GM12878 (cell line): ENCODE measurements at regions of chr10 and their contacts with region 1.

Region 1: GRCh38 chr10:5710859-5711258 is 26.2 kb downstream of the TASOR2 start:
- DNase-seq: no peak
- ATAC-seq: peak; percentile 63
- H3K4me3 ChIP-seq: peak overlapping the region; percentile 31; the same call in 1 of the 2 replicates
- H3K27ac ChIP-seq: peak overlapping the region; percentile 51; the same call in 1 of the 2 replicates
- H3K4me1 ChIP-seq: peaks cover 4% of the 10 kb centered on the region; the same call in 1 of the 2 replicates
- H3K27me3 ChIP-seq: no peaks in the 10 kb centered on the region
- CTCF ChIP-seq: no peak
- EP300 ChIP-seq: no peak
- POLR2A ChIP-seq: no peak
- RAD21 ChIP-seq: no peak

Region 2: GRCh38 chr10:5648584-5649457 is 62.0 kb before region 1 on chr10:
- CTCF ChIA-PET with region 1: no interaction called
- POLR2A ChIA-PET with region 1: no interaction called
- RAD21 ChIA-PET with region 1: no interaction called
- SMC1A ChIA-PET with region 1: no interaction called
- in situ Hi-C with region 1: no loop called
- intact Hi-C with region 1: no loop called
- DNase-seq: no peak
- ATAC-seq: peak; percentile 23; the same call in 2 of the 3 replicates
- H3K4me3 ChIP-seq: no peak overlapping the region
- H3K27ac ChIP-seq: no peak overlapping the region
- H3K4me1 ChIP-seq: peaks cover 10% of the 10 kb centered on the region
- H3K27me3 ChIP-seq: no peaks in the 10 kb centered on the region
- CTCF ChIP-seq: no peak
- EP300 ChIP-seq: no peak
- POLR2A ChIP-seq: no peak
- RAD21 ChIP-seq: no peak

Region 3: GRCh38 chr10:5692461-5693358 is 18.1 kb before region 1 on chr10:
- CTCF ChIA-PET with region 1: interaction called, 21 read pairs
- POLR2A ChIA-PET with region 1: interaction called, 9 read pairs
- RAD21 ChIA-PET with region 1: interaction called, 22 read pairs
- SMC1A ChIA-PET with region 1: interaction called, 191 read pairs
- in situ Hi-C with region 1: no loop called
- intact Hi-C with region 1: loop called (anchors 2 kb)
- DNase-seq: peak; percentile 32
- ATAC-seq: peak; percentile 90
- H3K4me3 ChIP-seq: peak overlapping the region; percentile 83
- H3K27ac ChIP-seq: peak overlapping the region; percentile 77
- H3K4me1 ChIP-seq: peaks cover 21% of the 10 kb centered on the region
- H3K27me3 ChIP-seq: no peaks in the 10 kb centered on the region
- CTCF ChIP-seq: 0 out of 6 replicates have a peak, but pooled peaks of 1 of the 3 experiments have one; percentile 5
- EP300 ChIP-seq: peak in 1 of 2 experiments; percentile 40; a peak in 1 of 4 replicates
- POLR2A ChIP-seq: peak; percentile 73
- RAD21 ChIP-seq: no peak

Region 4: DNA sequence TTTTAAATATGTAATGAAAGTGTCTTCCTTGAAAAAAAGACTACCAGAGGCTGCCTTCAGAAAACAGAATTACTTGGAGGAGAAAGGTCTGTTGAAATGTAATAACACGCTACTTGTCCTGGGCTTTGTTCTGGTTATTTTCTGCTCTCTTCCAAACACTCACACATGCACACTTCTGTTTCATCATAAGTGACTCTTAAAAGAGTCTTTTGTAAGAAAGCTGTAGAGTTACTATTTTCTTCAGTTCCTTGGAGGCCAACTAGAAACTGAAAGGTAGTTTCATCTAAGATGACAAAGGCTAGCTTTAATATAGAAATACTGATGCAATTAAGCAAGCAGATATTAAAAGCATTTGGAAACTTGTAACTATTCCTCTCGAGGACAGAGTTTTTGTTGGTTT is 12.8 kb after region 1 on chr10:
- CTCF ChIA-PET with region 1: interaction called, 5 read pairs
- POLR2A ChIA-PET with region 1: interaction called, 3 read pairs
- RAD21 ChIA-PET with region 1: no interaction called
- SMC1A ChIA-PET with region 1: interaction called, 10 read pairs
- in situ Hi-C with region 1: no loop called
- intact Hi-C with region 1: no loop called
- DNase-seq: no peak
- ATAC-seq: no peak
- H3K4me3 ChIP-seq: no peak overlapping the region
- H3K27ac ChIP-seq: no peak overlapping the region
- H3K4me1 ChIP-seq: no peaks in the 10 kb centered on the region
- H3K27me3 ChIP-seq: no peaks in the 10 kb centered on the region
- CTCF ChIP-seq: no peak
- EP300 ChIP-seq: no peak
- POLR2A ChIP-seq: no peak
- RAD21 ChIP-seq: no peak

Region 5: GRCh38 chr10:5752301-5752871 is 41.5 kb after region 1 on chr10:
- CTCF ChIA-PET with region 1: no interaction called
- POLR2A ChIA-PET with region 1: interaction called, 14 read pairs
- RAD21 ChIA-PET with region 1: no interaction called
- SMC1A ChIA-PET with region 1: no interaction called
- in situ Hi-C with region 1: no loop called
- intact Hi-C with region 1: no loop called
- DNase-seq: no peak
- ATAC-seq: no peak
- H3K4me3 ChIP-seq: no peak overlapping the region
- H3K27ac ChIP-seq: no peak overlapping the region
- H3K4me1 ChIP-seq: no peaks in the 10 kb centered on the region
- H3K27me3 ChIP-seq: no peaks in the 10 kb centered on the region
- CTCF ChIP-seq: no peak
- EP300 ChIP-seq: no peak
- POLR2A ChIP-seq: no peak
- RAD21 ChIP-seq: no peak